H1 (cell line): ENCODE measurements at regions of chr12 and their contacts with region 1.

Region 1: GRCh38 chr12:122336015-122336946 is 70.0 kb upstream of the VPS33A start:
- DNase-seq: peak in 1 of 2 experiments; percentile 55
- H3K4me3 ChIP-seq: no peak overlapping the region
- H3K27ac ChIP-seq: no peak overlapping the region
- H3K4me1 ChIP-seq: no peaks in the 10 kb centered on the region
- H3K27me3 ChIP-seq: no peaks in the 10 kb centered on the region
- CTCF ChIP-seq: peak; percentile 62 to 76 (median 68)
- EP300 ChIP-seq: no peak
- POLR2A ChIP-seq: no peak
- RAD21 ChIP-seq: peak; percentile 74 to 80

Region 2: GRCh38 chr12:122306407-122306806 is 29.9 kb before region 1 on chr12:
- CTCF ChIA-PET with region 1: interaction called, 19 read pairs
- POLR2A ChIA-PET with region 1: no interaction called
- DNase-seq: peak; percentile 7 to 47
- H3K4me3 ChIP-seq: no peak overlapping the region
- H3K27ac ChIP-seq: no peak overlapping the region
- H3K4me1 ChIP-seq: no peaks in the 10 kb centered on the region; a peak in 1 of 7 replicates
- H3K27me3 ChIP-seq: no peaks in the 10 kb centered on the region
- CTCF ChIP-seq: peak; percentile 69 to 88 (median 82)
- EP300 ChIP-seq: no peak
- POLR2A ChIP-seq: no peak
- RAD21 ChIP-seq: peak; percentile 64 to 76

Region 3: GRCh38 chr12:122312926-122313325 is 23.4 kb before region 1 on chr12:
- CTCF ChIA-PET with region 1: interaction called, 13 read pairs
- POLR2A ChIA-PET with region 1: no interaction called
- DNase-seq: no peak
- H3K4me3 ChIP-seq: no peak overlapping the region
- H3K27ac ChIP-seq: no peak overlapping the region
- H3K4me1 ChIP-seq: no peaks in the 10 kb centered on the region
- H3K27me3 ChIP-seq: no peaks in the 10 kb centered on the region
- CTCF ChIP-seq: no peak
- EP300 ChIP-seq: no peak
- POLR2A ChIP-seq: no peak
- RAD21 ChIP-seq: no peak

Region 4: GRCh38 chr12:122350141-122350848 is 14.0 kb after region 1 on chr12:
- CTCF ChIA-PET with region 1: interaction called, 53 read pairs
- POLR2A ChIA-PET with region 1: no interaction called
- DNase-seq: no peak
- H3K4me3 ChIP-seq: no peak overlapping the region
- H3K27ac ChIP-seq: no peak overlapping the region
- H3K4me1 ChIP-seq: no peaks in the 10 kb centered on the region
- H3K27me3 ChIP-seq: no peaks in the 10 kb centered on the region
- CTCF ChIP-seq: peak in 2 of 3 experiments; percentile 11 to 17; a peak in 2 of 4 replicates
- EP300 ChIP-seq: no peak
- POLR2A ChIP-seq: no peak
- RAD21 ChIP-seq: no peak

Region 5: DNA sequence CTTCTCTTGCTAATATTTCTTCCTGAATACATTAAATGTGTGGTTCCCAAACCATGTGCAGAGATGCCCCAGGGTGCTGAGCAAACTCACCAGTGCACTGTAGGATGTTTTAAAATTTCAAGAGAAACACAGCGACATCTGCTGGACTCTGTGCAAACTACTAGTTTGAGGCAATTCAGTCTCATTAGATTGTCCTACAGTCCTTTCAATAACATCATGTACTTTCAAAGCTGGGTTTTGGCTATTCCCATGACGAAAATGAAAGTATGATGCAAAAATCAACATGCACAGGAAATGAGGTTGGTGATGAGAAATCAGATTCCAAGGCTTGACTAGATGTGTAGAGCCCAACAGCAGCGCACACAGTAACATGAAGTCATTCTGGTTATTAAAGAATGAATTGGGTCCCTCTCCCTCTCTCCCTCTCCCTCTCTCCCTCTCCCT is 19.9 kb after region 1 on chr12:
- CTCF ChIA-PET with region 1: interaction called, 53 read pairs
- POLR2A ChIA-PET with region 1: no interaction called
- DNase-seq: peak in 1 of 2 experiments; percentile 66
- H3K4me3 ChIP-seq: no peak overlapping the region
- H3K27ac ChIP-seq: no peak overlapping the region
- H3K4me1 ChIP-seq: no peaks in the 10 kb centered on the region
- H3K27me3 ChIP-seq: no peaks in the 10 kb centered on the region
- CTCF ChIP-seq: peak in 2 of 3 experiments; percentile 61 to 81; a peak in 3 of 4 replicates
- EP300 ChIP-seq: no peak
- POLR2A ChIP-seq: no peak
- RAD21 ChIP-seq: peak; percentile 54 to 64

Region 6: GRCh38 chr12:122399592-122400373 is 63.5 kb after region 1 on chr12:
- CTCF ChIA-PET with region 1: interaction called, 12 read pairs
- POLR2A ChIA-PET with region 1: no interaction called
- DNase-seq: peak in 1 of 2 experiments; percentile 60
- H3K4me3 ChIP-seq: peak overlapping the region in 3 of 4 experiments; percentile 32 to 51 (median 44); a peak in 5 of 8 replicates
- H3K27ac ChIP-seq: peak overlapping the region; percentile 74
- H3K4me1 ChIP-seq: peaks cover 3 to 8% (median 5%) of the 10 kb centered on the region in 4 experiments; a peak in 6 of 7 replicates
- H3K27me3 ChIP-seq: no peaks in the 10 kb centered on the region
- CTCF ChIP-seq: peak in 2 of 3 experiments; percentile 72 to 77; a peak in 3 of 4 replicates
- EP300 ChIP-seq: no peak
- POLR2A ChIP-seq: peak in 1 of 2 experiments; percentile 39; a peak in 1 of 3 replicates
- RAD21 ChIP-seq: peak; percentile 90 to 92